Activated CD8-positive, alpha-beta T cell treated with anti-CD3 and anti-CD28 coated beads for 36 hours (primary cell): ENCODE measurements at regions of chr16 and their contacts with region 1.

Region 1: GRCh38 chr16:72840631-72841381 is 207.1 kb downstream of the ZFHX3 start:
- DNase-seq: no peak
- ATAC-seq: no peak
- H3K4me3 Mint-ChIP-seq: no peak overlapping the region
- H3K27ac Mint-ChIP-seq: no peak overlapping the region
- H3K4me1 Mint-ChIP-seq: peaks cover 7% of the 10 kb centered on the region
- H3K27me3 Mint-ChIP-seq: peaks cover 5% of the 10 kb centered on the region
- CTCF ChIP-seq: no peak

Region 2: DNA sequence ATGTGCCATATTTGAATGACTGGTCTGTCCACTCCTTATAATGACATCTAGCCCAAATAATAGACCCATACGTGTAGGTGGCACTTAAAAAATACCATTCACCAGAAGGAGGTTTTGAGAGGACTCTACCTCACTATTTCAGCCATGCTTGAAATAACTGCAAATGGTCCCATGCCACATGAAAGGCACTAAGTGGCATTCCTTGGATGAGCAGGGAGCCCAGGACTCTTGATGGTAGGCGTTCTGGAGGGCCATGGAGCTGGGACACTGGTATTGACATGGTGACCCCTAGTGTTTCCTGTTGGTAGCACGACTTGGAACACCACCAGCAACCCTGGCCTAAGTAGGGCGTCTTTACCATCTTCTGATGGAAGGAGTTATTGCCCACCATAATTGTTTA is 355.9 kb after region 1 on chr16:
- CTCF ChIA-PET with region 1: no interaction called
- POLR2A ChIA-PET with region 1: no interaction called
- intact Hi-C with region 1: loop called (anchors 5 kb)
- DNase-seq: peak; percentile 46
- ATAC-seq: no peak
- H3K4me3 Mint-ChIP-seq: no peak overlapping the region
- H3K27ac Mint-ChIP-seq: no peak overlapping the region
- H3K4me1 Mint-ChIP-seq: no peaks in the 10 kb centered on the region
- H3K27me3 Mint-ChIP-seq: no peaks in the 10 kb centered on the region
- CTCF ChIP-seq: peak; percentile 37